Activated T-helper 1 cell treated with anti-CD3 and anti-CD28 coated beads, Interleukin-12 subunit alpha, Interleukin-12 subunit beta, Interleukin-2, Interleukin-4 antibody, amounts not matched to agents 30 ng/mL and 10 ng/mL and 1 ng/mL, durations not matched to agents 14 hours and 24 hours and 36 hours (primary cell): ENCODE measurements at regions of chr11 and their contacts with region 1.

Region 1: DNA sequence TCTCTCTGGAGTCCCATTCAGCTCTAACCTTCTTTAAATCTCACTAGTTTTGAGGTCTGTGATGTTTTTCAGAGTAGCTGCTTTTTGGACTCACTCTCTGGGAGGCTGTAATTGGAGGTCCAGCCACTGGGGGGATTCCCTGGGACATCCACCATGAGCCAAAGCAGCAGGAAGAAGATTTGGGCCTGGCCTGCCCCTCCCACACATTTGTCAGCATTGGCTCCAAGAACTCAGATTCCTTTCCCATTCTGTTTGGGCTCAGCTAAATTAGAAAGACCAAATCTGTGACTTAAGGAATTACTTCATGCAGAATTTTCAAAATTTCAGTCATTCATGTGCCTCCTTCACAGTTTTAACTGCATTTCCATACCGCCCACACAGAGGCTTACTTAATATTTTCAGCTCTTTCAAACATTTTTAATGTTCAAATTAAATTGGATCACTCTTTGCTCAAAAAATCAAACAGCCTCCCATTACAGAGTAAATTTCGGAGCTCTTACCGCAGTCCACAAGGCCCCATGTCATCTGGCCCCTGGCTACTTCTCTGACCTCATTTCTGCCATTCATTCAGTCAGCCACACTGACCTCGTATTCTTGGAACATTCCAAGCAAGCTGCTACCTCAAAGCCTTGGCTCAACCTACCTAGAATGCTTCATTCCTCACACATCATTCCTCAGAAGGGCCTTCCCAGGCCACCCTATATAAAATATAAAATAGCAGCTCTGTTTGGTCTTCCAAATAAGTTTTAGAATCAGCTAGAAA is 54.5 kb upstream of the RRAS2 start:
- DNase-seq: no peak
- H3K4me3 Mint-ChIP-seq: no peak overlapping the region
- H3K27ac Mint-ChIP-seq: no peak overlapping the region
- H3K4me1 Mint-ChIP-seq: peaks cover 79% of the 10 kb centered on the region
- H3K27me3 Mint-ChIP-seq: no peaks in the 10 kb centered on the region

Region 2: DNA sequence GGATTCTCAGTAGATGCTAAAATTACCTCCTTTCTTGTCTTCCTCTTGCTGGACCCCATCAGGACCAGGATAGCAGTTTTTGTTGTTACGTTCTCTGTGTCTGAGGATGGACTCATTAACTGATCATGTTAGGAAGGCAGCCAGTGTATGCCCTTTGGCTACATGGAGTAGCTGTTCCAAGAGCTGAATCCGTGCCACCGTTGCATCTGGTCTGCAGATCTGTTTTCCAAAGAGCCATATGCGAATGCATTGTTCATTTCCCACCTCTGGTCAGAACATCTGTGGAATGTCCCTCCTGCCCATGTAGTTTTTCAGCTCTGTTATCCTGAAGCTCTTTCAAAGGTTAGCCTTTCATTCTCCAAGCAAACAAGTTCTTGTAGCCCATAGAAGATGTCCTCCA is 262.6 kb before region 1 on chr11:
- intact Hi-C with region 1: no loop called
- DNase-seq: no peak
- H3K4me3 Mint-ChIP-seq: no peak overlapping the region
- H3K27ac Mint-ChIP-seq: no peak overlapping the region
- H3K4me1 Mint-ChIP-seq: no peaks in the 10 kb centered on the region
- H3K27me3 Mint-ChIP-seq: peaks cover 11% of the 10 kb centered on the region

Region 3: GRCh38 chr11:14308114-14308896 is 105.2 kb before region 1 on chr11:
- intact Hi-C with region 1: loop called (anchors 2 kb)
- DNase-seq: no peak
- H3K4me3 Mint-ChIP-seq: no peak overlapping the region
- H3K27ac Mint-ChIP-seq: no peak overlapping the region
- H3K4me1 Mint-ChIP-seq: peaks cover 26% of the 10 kb centered on the region
- H3K27me3 Mint-ChIP-seq: no peaks in the 10 kb centered on the region

Region 4: DNA sequence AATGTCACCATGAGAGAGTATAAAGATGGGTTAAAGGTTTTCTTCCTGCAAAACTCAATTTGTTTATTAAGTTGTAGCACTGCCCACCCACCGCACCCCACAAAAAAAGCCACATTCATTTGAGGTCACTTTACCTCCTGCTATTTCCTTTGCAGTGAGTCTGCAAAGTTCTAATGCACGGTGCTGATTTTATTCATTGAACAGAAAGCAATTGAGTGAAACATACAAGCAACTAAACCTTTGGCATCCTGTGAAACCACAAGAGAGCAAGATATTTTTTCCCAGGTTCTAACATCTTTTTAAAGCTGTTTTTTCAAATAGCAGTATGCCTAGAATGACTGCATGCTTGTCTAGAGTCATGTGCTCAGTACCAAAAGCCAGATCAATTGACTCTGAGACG is 93.5 kb before region 1 on chr11:
- intact Hi-C with region 1: loop called (anchors 1 kb)
- DNase-seq: peak; percentile 34
- H3K4me3 Mint-ChIP-seq: peak overlapping the region; percentile 50
- H3K27ac Mint-ChIP-seq: peak overlapping the region; percentile 44
- H3K4me1 Mint-ChIP-seq: peaks cover 83% of the 10 kb centered on the region
- H3K27me3 Mint-ChIP-seq: no peaks in the 10 kb centered on the region